GM13976 (cell line): ENCODE measurements at regions of chr1 and their contacts with region 1.

Region 1: DNA sequence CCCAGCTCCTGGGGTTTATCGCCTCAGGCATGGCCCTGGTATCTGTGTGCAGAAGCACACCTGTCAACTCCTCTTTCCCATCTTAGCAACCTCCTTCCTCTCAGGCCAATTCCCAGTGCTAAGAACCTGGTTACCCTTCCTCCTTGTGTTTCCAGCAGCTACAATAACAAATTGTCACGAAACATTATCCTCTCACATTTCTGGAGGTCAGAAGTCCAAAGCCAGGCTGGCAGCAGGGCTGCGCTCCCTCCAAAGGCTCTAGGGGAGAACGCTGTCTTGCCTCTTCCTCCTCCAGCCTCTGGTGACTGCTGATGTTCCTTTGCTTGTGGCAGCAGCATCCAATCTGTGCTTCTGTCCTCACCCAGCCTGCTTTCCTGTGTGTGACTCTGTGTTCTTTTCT is 10.7 kb upstream of the MRPS14 start:
- DNase-seq: no peak
- CTCF ChIP-seq: no peak

Region 2: GRCh38 chr1:174297351-174297750 is 736.6 kb before region 1 on chr1:
- in situ Hi-C with region 1: no loop called
- DNase-seq: no peak
- CTCF ChIP-seq: no peak

Region 3: GRCh38 chr1:175114996-175115395 is 81.0 kb after region 1 on chr1:
- in situ Hi-C with region 1: loop called (anchors 5 kb)
- DNase-seq: no peak
- CTCF ChIP-seq: no peak